Common myeloid progenitor, CD34-positive (primary cell): ENCODE measurements at regions of chr16 and their contacts with region 1.

Region 1: DNA sequence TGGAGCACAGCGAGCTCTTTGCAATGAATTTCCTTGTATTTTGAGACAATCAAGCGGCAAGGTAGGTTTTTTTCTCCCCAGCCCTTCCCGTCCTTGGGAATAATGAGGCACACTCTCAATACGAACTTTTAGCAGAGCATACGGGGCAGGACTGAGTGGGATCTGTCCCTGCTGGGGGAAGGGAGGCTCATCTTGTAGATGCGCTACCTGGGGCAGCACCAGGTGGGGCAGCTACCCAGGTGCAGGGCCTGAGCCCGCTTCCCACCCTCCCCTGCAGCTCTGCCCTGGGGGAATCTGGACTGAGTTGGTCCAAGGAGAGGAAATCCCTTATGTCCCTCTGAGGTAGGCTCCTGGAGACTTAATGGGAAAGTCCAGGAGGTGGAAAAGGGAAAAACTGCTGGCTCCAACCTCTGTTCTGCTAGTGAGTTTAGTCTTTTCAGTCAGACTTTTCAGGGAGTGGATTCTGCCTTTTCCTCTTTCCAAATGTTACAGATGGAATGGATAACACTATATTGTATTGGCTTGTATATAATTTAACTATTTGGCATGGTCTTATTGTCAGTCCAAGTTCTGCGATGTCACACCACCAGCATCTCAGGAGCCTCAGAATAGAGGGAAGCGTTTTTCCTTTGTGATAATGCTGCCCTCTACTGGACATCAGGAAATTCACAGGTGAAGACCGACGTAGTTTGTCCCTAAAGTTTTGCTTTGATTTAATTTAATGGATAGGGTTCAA is 9.6 kb upstream of the CES1 start:
- DNase-seq: peak; percentile 51 to 66 (median 58)
- H3K4me3 ChIP-seq: no peak overlapping the region
- H3K27ac ChIP-seq: no peak overlapping the region
- H3K4me1 ChIP-seq: peaks cover 0 to 6% (median 0%) of the 10 kb centered on the region in 4 experiments
- H3K27me3 ChIP-seq: peaks cover 2 to 13% (median 3%) of the 10 kb centered on the region in 5 experiments

Region 2: GRCh38 chr16:55711959-55712876 is 130.3 kb before region 1 on chr16:
- CTCF ChIA-PET with region 1: interaction called, 74 read pairs
- POLR2A ChIA-PET with region 1: no interaction called
- DNase-seq: peak; percentile 56 to 81 (median 71)
- H3K4me3 ChIP-seq: no peak overlapping the region
- H3K27ac ChIP-seq: no peak overlapping the region
- H3K4me1 ChIP-seq: no peaks in the 10 kb centered on the region
- H3K27me3 ChIP-seq: peaks cover 0 to 5% (median under 1%) of the 10 kb centered on the region in 5 experiments

Region 3: GRCh38 chr16:55717326-55717725 is 125.2 kb before region 1 on chr16:
- CTCF ChIA-PET with region 1: interaction called, 74 read pairs
- POLR2A ChIA-PET with region 1: no interaction called
- DNase-seq: no peak
- H3K4me3 ChIP-seq: no peak overlapping the region
- H3K27ac ChIP-seq: no peak overlapping the region
- H3K4me1 ChIP-seq: no peaks in the 10 kb centered on the region
- H3K27me3 ChIP-seq: peaks cover 0 to 5% (median 4%) of the 10 kb centered on the region in 5 experiments